Breast epithelium (tissue), 4 donors: ENCODE measurements at regions of chr2 and their contacts with region 1.

Region 1: DNA sequence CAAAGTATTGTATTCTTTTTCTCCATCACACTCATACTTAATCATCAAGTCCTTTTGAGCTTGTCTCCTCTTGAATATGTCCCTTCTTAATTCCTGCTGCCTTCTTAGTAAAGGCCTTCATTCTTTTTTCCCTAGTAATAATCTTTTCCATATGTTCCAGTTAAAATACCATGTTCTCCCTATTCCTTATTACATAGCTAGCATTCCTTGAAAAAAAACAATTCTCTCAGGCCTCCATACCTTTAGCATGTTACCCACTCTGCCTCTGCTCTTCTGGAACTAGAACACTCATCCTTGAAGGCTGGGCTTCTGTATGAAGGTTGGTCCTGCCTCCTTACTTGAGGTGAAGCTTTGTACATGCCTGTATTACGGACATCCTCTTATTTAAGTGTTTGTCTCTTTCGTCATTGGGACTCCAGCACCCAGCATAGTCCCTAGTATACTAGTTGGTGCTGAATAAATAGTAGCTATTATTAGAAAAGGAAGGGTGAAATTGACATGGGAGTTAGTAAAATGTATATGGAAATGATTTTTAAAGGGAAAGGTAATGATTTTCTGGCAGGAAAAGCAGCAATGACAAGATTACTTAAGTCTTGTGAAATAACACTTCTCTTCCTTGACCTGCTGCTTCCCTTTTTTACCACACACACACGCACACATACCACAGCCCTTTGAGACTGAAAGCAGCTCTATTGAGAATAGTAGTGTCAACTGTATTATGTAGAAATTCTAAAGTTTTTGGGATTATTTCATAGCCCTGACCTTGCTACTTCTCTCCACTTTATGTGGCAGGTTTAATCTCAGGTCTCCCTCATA is 45.6 kb downstream of the REL start:
- DNase-seq: no peak
- H3K4me3 ChIP-seq: no peak overlapping the region
- H3K27ac ChIP-seq: peak overlapping the region in 1 of 2 donors; percentile 52
- H3K4me1 ChIP-seq: no peaks in the 10 kb centered on the region
- H3K27me3 ChIP-seq: no peaks in the 10 kb centered on the region
- CTCF ChIP-seq: no peak
- POLR2A ChIP-seq: no peak

Region 2: DNA sequence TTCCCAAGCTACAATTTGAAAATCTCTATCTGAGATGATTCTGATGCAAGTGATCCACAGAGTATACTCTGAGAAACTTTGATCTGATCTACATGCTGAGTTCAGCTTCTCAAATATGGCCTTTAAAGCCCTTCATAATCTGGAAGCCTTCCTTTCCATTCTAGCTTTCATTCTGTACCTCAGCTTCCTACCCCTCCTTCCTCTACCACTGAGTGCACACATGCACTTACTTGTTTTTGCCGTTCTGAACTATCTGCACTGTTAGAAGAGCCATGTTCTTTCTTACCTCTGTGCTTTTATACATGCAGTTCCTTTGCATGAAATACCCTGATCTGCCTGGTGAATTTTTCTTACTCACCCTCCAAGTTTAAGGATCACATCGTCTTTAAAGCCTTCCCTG is 20.6 kb before region 1 on chr2:
- intact Hi-C with region 1: loop called (anchors 1 kb)
- DNase-seq: no peak
- H3K4me3 ChIP-seq: no peak overlapping the region
- H3K27ac ChIP-seq: no peak overlapping the region
- H3K4me1 ChIP-seq: no peaks in the 10 kb centered on the region
- H3K27me3 ChIP-seq: no peaks in the 10 kb centered on the region
- CTCF ChIP-seq: no peak
- POLR2A ChIP-seq: no peak